ENCODE measurements at regions of chr2 and their contacts with region 1.

Region 1: GRCh38 chr2:111883661-111884591 is at the start of gene ANAPC1:
- DNase-seq: peak; percentile 96
- H3K4me3 Mint-ChIP-seq: peak within 1 kb of the TSS; percentile 93
- H3K27ac Mint-ChIP-seq: peak within 1 kb of the TSS; percentile 93
- H3K4me1 Mint-ChIP-seq: peaks cover 12% of the 10 kb centered on the region
- H3K27me3 Mint-ChIP-seq: no peaks in the 10 kb centered on the region
- total RNA-seq, gene ANAPC1: 129 and 133 TPM in 2 replicates

Region 2: GRCh38 chr2:111897924-111898702 is 14.2 kb after region 1 on chr2 and contains the start of gene MERTK:
- intact Hi-C with region 1: loop called (anchors 2 kb)
- DNase-seq: peak; percentile 88
- H3K4me3 Mint-ChIP-seq: peak within 1 kb of the TSS; percentile 81
- H3K27ac Mint-ChIP-seq: no peak within 1 kb of the TSS
- H3K4me1 Mint-ChIP-seq: peaks cover 14% of the 10 kb centered on the region
- H3K27me3 Mint-ChIP-seq: peaks cover 51% of the 10 kb centered on the region
- total RNA-seq, gene MERTK: 0.57 and 0.63 TPM in 2 replicates

Region 3: GRCh38 chr2:112048887-112049286 is 165.0 kb after region 1 on chr2:
- intact Hi-C with region 1: loop called (anchors 1 kb)
- DNase-seq: peak; percentile 78
- H3K4me3 Mint-ChIP-seq: no peak overlapping the region
- H3K27ac Mint-ChIP-seq: no peak overlapping the region
- H3K4me1 Mint-ChIP-seq: peaks cover 6% of the 10 kb centered on the region
- H3K27me3 Mint-ChIP-seq: peaks cover 18% of the 10 kb centered on the region

Region 4: DNA sequence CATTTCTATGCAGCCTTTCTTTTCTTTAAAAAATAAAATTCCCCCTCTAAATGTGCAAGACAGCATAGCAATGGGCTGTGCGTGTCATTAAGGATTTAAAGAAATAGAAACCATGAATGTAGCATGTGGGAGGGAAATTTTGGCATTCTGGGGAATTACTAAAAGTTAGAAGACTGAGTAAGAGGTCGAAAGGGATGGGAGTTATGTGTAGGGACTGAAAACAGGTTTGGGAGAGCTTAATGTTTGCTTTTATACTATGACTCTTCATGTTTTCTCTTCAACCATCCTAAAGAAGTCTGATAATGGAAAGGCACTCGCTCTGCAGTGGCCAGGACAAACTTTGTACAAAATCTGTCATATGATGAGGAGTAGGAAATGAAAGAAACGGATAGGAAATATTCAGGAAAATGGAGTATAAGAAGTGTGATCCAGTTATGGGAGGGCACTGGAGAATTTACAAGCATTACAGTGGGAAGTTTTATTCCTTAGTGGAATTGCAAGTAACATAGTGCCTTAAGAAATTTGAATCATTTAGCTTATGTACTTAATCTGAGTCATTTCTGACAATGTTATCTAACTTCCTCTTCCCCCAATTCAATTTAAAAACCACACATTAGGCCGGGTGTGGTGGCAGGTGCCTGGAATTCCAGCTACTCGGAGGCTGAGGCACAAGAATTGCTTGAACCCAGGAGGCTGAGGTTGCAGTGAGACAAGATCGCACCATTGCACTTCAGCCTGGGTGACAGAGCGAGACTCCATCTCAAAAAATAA is 191.7 kb after region 1 on chr2:
- intact Hi-C with region 1: no loop called
- DNase-seq: no peak
- H3K4me3 Mint-ChIP-seq: no peak overlapping the region
- H3K27ac Mint-ChIP-seq: peak overlapping the region; percentile 47
- H3K4me1 Mint-ChIP-seq: peaks cover 22% of the 10 kb centered on the region
- H3K27me3 Mint-ChIP-seq: no peaks in the 10 kb centered on the region

Region 5: GRCh38 chr2:112187805-112188596 is 304.1 kb after region 1 on chr2:
- intact Hi-C with region 1: loop called (anchors 10 kb)
- DNase-seq: peak; percentile 91
- H3K4me3 Mint-ChIP-seq: peak overlapping the region; percentile 77
- H3K27ac Mint-ChIP-seq: peak overlapping the region; percentile 94
- H3K4me1 Mint-ChIP-seq: peaks cover 76% of the 10 kb centered on the region
- H3K27me3 Mint-ChIP-seq: peaks cover 2% of the 10 kb centered on the region